PC-3 (cell line): ENCODE measurements at regions of chr7 and their contacts with region 1.

Region 1: DNA sequence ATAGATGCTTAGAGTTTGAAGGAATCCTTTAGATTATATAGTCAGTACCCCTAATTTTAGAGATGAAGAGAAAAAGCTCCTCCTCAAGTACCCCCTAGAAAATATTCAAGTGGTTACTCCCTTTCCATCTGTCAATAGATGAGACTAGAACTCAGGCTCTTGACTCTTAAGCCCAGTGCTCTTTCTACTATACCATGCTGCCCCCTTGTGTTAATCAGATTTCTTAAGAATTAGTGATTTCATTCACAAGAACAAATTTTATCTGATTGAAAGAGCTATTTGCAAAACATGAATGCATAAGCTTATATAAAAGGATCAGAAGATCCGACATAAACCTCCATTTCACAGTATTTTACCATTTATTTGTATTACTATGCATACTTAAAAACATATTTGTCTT is 179.3 kb downstream of the TFEC start:
- DNase-seq: peak; percentile 69
- ATAC-seq: peak; percentile 55; the same call in 1 of the 2 replicates
- H3K4me3 ChIP-seq: no peak overlapping the region
- H3K27ac ChIP-seq: no peak overlapping the region
- H3K4me1 ChIP-seq: no peaks in the 10 kb centered on the region
- H3K27me3 ChIP-seq: peaks cover 61% of the 10 kb centered on the region
- CTCF ChIP-seq: peak; percentile 67

Region 2: GRCh38 chr7:114026486-114027089 is 1824.7 kb before region 1 on chr7:
- CTCF ChIA-PET with region 1: no interaction called
- POLR2A ChIA-PET with region 1: no interaction called
- intact Hi-C with region 1: loop called (anchors 1 kb)
- DNase-seq: peak; percentile 82
- ATAC-seq: peak; percentile 50; the same call in 1 of the 2 replicates
- H3K4me3 ChIP-seq: no peak overlapping the region
- H3K27ac ChIP-seq: no peak overlapping the region
- H3K4me1 ChIP-seq: no peaks in the 10 kb centered on the region
- H3K27me3 ChIP-seq: peaks cover 39% of the 10 kb centered on the region
- CTCF ChIP-seq: peak; percentile 65

Region 3: GRCh38 chr7:114426382-114427223 is 1424.7 kb before region 1 on chr7:
- CTCF ChIA-PET with region 1: interaction called, 8 read pairs
- POLR2A ChIA-PET with region 1: no interaction called
- intact Hi-C with region 1: loop called (anchors 1 kb)
- DNase-seq: peak; percentile 37
- ATAC-seq: peak; percentile 65; the same call in 1 of the 2 replicates
- H3K4me3 ChIP-seq: no peak overlapping the region
- H3K27ac ChIP-seq: no peak overlapping the region
- H3K4me1 ChIP-seq: no peaks in the 10 kb centered on the region
- H3K27me3 ChIP-seq: peaks cover 41% of the 10 kb centered on the region
- CTCF ChIP-seq: peak; percentile 53

Region 4: GRCh38 chr7:116122972-116123595 is 271.8 kb after region 1 on chr7:
- CTCF ChIA-PET with region 1: no interaction called
- POLR2A ChIA-PET with region 1: interaction called, 8 read pairs
- intact Hi-C with region 1: loop called (anchors 1 kb)
- DNase-seq: peak; percentile 55
- ATAC-seq: peak; percentile 20; the same call in 1 of the 2 replicates
- H3K4me3 ChIP-seq: no peak overlapping the region
- H3K27ac ChIP-seq: no peak overlapping the region
- H3K4me1 ChIP-seq: no peaks in the 10 kb centered on the region
- H3K27me3 ChIP-seq: peaks cover 18% of the 10 kb centered on the region; the same call in 1 of the 2 replicates
- CTCF ChIP-seq: peak; percentile 88